Mucosa of descending colon (tissue), 3 donors: ENCODE measurements at regions of chr1 and their contacts with region 1.

Region 1: DNA sequence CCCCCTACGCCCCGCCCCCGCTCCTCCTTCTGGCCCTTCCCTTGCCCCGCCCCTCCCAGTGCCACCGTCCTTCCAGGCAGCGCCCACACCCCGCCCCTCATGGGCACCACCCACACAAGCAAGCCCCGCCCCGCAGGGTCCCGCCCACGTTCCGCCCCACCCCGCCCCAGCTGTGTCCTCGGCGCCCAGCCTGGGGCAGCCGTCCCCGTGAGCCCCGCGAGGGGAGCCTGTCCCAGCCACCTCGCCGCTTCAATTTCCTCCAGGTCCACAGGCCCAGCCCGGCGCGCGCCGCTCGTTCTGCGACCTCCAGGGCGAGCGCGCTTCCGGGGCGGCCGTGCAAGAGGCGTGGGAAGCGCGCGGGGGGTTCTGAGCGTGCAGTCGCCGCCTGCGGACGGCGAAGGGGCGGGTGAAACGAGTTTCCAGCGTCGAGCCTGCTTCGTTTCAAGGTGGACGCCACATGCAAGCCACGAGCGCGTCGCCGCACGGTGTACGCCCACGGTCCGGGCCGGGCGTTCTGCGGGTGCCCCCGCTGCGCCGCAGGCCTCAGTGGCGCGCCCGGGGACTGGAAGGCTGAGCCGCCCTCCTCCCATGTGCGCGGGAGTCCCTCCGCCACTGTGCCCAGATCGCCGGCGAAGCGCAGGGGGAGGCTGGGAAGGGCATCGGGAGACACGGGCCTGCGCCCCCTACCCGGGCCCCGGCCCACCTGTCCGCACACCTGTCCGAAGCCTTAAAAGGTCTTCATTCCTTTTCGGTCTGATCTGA is 10.8 kb upstream of the FAAP20 start:
- DNase-seq: peak; percentile 98
- ATAC-seq: peak; percentile 92
- H3K4me3 ChIP-seq: peak overlapping the region; percentile 14
- H3K4me1 ChIP-seq: peaks cover 34% of the 10 kb centered on the region
- CTCF ChIP-seq: no peak

Region 2: DNA sequence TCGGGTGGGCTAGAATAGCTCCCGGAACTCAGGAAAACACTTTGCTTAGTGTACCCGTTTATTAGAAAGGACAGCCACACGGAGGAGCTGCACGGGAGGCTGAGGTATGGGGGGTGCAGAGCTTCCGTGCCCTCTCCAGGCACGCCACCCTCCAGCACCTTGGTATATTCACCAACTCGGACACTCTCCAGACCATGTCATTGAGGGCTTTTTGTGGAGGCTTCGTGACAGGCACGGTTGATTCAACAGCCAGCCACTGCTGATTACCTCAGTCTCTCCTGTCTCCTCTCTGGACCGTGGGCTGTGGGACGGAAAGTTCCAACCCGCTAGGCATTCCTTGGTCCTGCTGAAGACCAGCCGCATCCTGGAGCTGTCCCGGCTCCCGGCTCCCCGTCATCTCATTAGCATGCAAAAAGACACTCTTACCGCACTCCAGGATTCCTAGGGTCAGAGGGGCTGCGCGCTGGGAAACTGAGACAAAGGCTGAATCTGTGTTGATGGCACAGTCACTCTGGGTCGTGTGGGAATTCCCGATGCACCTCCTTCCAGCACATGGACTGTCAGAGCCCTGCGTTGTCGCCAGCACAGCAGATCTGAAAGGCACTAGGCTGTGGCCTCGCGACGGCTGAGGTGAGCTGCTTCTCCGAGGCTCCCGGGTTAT is 89.6 kb before region 1 on chr1:
- intact Hi-C with region 1: no loop called
- DNase-seq: peak in 1 of 3 donors; percentile 12
- ATAC-seq: no peak
- H3K4me3 ChIP-seq: no peak overlapping the region
- H3K4me1 ChIP-seq: no peaks in the 10 kb centered on the region
- CTCF ChIP-seq: no peak

Region 3: GRCh38 chr1:2314803-2315673 is 109.7 kb after region 1 on chr1:
- intact Hi-C with region 1: loop called in 1 of 2 experiments (anchors 10 kb)
- DNase-seq: peak; percentile 42 to 81 (median 71)
- ATAC-seq: peak; percentile 55
- H3K4me3 ChIP-seq: no peak overlapping the region
- H3K4me1 ChIP-seq: peaks cover 35% of the 10 kb centered on the region
- CTCF ChIP-seq: peak; percentile 95

Region 4: GRCh38 chr1:2474933-2475371 is 269.6 kb after region 1 on chr1:
- intact Hi-C with region 1: no loop called
- DNase-seq: no peak
- ATAC-seq: no peak
- H3K4me3 ChIP-seq: no peak overlapping the region
- H3K4me1 ChIP-seq: peaks cover 11% of the 10 kb centered on the region
- CTCF ChIP-seq: no peak